GM10248 (cell line): ENCODE measurements at regions of chr1 and their contacts with region 1.

Region 1: GRCh38 chr1:27603681-27604578 is at the start of gene AHDC1:
- DNase-seq: peak; percentile 93
- CTCF ChIP-seq: no peak

Region 2: DNA sequence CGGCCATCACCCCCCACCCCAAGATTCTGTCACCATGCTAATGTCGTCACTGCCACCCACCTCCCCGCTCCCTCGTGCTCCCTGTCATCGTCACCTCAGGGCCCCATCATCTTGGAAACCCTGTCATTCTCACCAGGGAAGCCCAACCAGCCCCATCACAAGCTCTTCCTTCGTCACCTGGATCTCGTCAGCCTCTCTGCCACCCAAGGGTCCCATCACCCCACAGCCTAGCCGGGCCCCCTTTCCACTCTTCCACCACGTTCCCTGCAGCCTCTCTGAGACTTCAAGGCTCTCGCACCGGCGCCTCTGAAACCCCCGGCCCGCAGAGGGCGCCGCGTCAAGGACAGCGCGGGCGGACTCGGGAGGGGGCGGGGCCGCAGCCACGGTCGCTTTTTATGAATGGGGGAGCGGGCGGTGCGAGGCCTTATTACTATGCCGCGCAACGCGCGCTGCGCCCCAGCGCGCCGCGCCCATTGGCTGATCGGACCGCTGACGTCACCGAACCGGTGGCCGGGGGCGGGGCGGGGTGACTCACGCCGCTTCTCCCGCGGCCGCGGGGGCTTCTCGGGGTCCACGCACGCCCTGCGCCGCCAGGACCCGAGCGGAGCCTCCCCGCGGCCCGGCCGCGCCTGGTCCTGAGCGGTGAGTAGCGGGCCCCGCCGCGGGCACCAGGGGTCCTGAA is 211.7 kb before region 1 on chr1 and contains the start of gene GPR3:
- CTCF ChIA-PET with region 1: interaction called, 39 read pairs
- POLR2A ChIA-PET with region 1: no interaction called
- DNase-seq: peak; percentile 94
- CTCF ChIP-seq: peak; percentile 57

Region 3: GRCh38 chr1:27556781-27557595 is 46.9 kb before region 1 on chr1:
- CTCF ChIA-PET with region 1: interaction called, 115 read pairs
- POLR2A ChIA-PET with region 1: no interaction called
- DNase-seq: peak; percentile 91
- CTCF ChIP-seq: peak; percentile 85

Region 4: GRCh38 chr1:27589841-27590426 is 14.0 kb before region 1 on chr1:
- CTCF ChIA-PET with region 1: interaction called, 12 read pairs
- POLR2A ChIA-PET with region 1: interaction called, 3 read pairs
- DNase-seq: no peak
- CTCF ChIP-seq: no peak

Region 5: GRCh38 chr1:27632387-27633297 is 28.7 kb after region 1 on chr1:
- CTCF ChIA-PET with region 1: interaction called, 25 read pairs
- POLR2A ChIA-PET with region 1: no interaction called
- DNase-seq: peak; percentile 67
- CTCF ChIP-seq: no peak

Region 6: GRCh38 chr1:27656157-27656893 is 52.4 kb after region 1 on chr1:
- CTCF ChIA-PET with region 1: interaction called, 154 read pairs
- POLR2A ChIA-PET with region 1: no interaction called
- DNase-seq: no peak
- CTCF ChIP-seq: no peak

Region 7: GRCh38 chr1:27671964-27672749 is 68.2 kb after region 1 on chr1 and contains the start of gene IFI6:
- CTCF ChIA-PET with region 1: interaction called, 50 read pairs
- POLR2A ChIA-PET with region 1: no interaction called
- DNase-seq: peak; percentile 89
- CTCF ChIP-seq: no peak

Region 8: GRCh38 chr1:27744556-27744955 is 140.6 kb after region 1 on chr1:
- CTCF ChIA-PET with region 1: no interaction called
- POLR2A ChIA-PET with region 1: no interaction called
- DNase-seq: no peak
- CTCF ChIP-seq: no peak

Region 9: GRCh38 chr1:27772933-27773825 is 169.2 kb after region 1 on chr1 and contains the start of gene STX12:
- CTCF ChIA-PET with region 1: no interaction called
- POLR2A ChIA-PET with region 1: no interaction called
- DNase-seq: peak; percentile 99
- CTCF ChIP-seq: no peak